Activated CD4-positive, alpha-beta T cell treated with anti-CD3 and anti-CD28 coated beads, Interleukin-2, amount 10 ng/mL, durations not matched to agents 24 days and 14 days (primary cell): ENCODE measurements at regions of chr6 and their contacts with region 1.

Region 1: GRCh38 chr6:118651282-118652050 is at the start of gene CEP85L:
- DNase-seq: peak; percentile 96
- H3K4me3 Mint-ChIP-seq: peak within 1 kb of the TSS; percentile 90
- H3K27ac Mint-ChIP-seq: peak within 1 kb of the TSS; percentile 93
- H3K4me1 Mint-ChIP-seq: peaks cover 29% of the 10 kb centered on the region
- H3K27me3 Mint-ChIP-seq: no peaks in the 10 kb centered on the region
- total RNA-seq, gene CEP85L: 42.3 and 42.7 TPM in 2 replicates

Region 2: DNA sequence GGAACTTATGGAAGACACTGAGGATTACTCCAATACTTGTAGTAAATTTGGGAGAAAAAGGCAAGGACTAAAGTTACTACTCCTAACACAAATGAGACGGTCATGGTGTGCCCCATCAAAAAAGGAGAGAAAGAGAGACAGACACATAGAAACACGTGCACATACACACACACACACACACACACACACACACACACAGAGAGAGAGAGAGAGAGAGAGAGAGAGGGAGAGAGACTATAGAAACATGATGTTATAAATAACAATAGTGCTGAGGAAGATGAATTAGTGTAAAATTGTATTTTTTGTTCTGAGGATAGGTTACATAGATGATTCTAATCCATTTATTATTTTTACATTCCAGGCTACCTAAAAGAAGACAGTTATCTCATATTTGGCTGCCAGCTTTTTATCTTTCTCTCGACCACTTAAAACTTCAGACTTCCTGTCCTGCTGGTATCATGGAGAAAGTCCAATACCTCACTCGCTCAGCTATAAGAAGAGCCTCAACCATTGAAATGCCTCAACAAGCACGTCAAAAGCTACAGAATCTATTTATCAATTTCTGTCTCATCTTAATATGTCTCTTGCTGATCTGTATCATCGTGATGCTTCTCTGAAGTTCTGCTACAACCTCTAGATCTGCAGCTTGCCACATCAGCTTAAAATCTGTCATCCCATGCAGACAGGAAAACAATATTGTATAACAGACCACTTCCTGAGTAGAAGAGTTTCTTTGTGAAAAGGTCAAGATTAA is 92.8 kb before region 1 on chr6:
- intact Hi-C with region 1: no loop called
- DNase-seq: peak; percentile 78
- H3K4me3 Mint-ChIP-seq: peak overlapping the region; percentile 81
- H3K27ac Mint-ChIP-seq: peak overlapping the region; percentile 96
- H3K4me1 Mint-ChIP-seq: peaks cover 26% of the 10 kb centered on the region
- H3K27me3 Mint-ChIP-seq: no peaks in the 10 kb centered on the region

Region 3: DNA sequence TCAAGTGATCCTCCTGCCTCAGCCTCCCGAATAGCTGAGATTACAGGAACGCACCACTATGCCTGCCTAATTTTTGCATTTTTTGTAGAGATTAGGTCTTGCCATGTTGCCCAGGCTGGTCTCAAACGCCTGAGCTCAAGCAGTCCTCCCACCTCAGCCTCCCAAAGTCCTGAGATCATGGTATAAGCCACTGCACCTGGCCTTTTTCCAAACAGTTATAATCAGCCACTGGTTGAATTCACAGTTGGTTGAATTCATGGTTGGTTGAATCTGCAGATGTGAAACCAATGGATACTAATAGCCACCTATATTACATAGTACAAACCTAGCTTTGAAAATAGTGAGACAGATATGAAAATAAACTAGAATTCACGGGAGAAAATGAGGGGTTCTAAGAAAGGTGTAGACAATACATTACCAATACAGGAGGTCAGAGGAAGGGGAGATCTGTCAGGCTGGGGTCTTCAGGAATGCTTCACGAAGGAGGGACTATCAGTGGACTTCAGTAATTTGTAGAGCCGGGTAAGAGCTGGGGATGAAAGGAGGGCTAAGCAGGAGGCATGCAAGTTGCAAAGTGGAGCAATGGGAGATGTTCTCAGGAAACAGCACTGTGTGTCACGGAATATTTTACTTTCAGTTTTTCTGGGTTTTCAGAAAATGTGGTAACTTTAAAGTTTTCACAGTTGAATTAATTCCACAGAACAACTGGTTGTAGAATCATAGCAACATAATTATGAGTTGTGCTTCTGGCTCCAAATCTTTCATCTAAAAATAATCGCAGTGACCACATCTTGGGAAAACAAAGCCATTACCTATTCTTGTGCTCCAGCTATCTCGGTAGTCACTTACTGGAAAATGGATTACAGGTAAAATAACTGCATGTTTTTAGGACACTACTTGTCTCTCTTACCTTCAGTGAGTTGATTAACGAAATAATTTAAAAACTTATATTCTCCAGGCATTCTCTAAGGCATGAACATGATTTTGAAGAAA is 12.8 kb after region 1 on chr6:
- intact Hi-C with region 1: loop called (anchors 1 kb)
- DNase-seq: peak; percentile 73
- H3K4me3 Mint-ChIP-seq: peak overlapping the region; percentile 83
- H3K27ac Mint-ChIP-seq: peak overlapping the region; percentile 95
- H3K4me1 Mint-ChIP-seq: peaks cover 54% of the 10 kb centered on the region
- H3K27me3 Mint-ChIP-seq: no peaks in the 10 kb centered on the region

Region 4: GRCh38 chr6:118776607-118777549 is 125.4 kb after region 1 on chr6:
- intact Hi-C with region 1: loop called (anchors 1 kb)
- DNase-seq: peak; percentile 91
- H3K4me3 Mint-ChIP-seq: peak overlapping the region; percentile 35
- H3K27ac Mint-ChIP-seq: peak overlapping the region; percentile 59
- H3K4me1 Mint-ChIP-seq: peaks cover 15% of the 10 kb centered on the region
- H3K27me3 Mint-ChIP-seq: peaks cover 10% of the 10 kb centered on the region

Region 5: DNA sequence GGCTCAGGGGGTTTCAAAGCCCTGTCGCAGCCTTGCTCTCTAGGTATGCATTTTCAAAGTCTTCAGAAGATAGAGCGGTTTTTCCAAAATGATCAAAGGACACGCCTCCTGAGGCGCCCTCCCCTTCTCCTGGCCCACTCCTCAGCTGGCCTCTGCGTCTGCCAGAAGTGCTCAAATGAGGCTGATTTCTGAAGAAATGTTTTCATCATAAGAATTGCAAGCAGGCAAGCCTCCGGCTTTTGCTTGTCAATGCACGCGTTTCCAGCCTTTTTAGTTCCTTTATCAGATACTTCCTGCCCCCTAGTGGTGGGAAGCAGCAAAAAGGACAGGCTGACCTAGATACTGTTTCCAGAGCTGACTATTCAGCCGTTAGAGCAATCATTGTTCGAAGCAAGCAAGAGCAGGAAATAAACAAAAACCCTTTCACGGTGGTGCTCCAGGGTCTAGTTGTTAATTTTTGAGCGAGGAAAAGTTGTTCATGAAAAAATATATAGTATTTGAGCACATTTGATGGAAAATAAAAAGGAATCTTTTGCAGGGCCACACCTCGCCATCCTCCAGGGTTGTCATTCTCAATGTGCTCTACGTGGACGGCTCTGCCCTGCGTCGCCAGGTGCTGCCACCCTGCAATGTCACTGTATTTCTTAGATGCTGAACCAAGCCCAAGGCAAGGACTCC is 149.1 kb after region 1 on chr6:
- intact Hi-C with region 1: loop called (anchors 2 kb)
- DNase-seq: peak; percentile 95
- H3K4me3 Mint-ChIP-seq: peak overlapping the region; percentile 60
- H3K27ac Mint-ChIP-seq: peak overlapping the region; percentile 51
- H3K4me1 Mint-ChIP-seq: peaks cover 30% of the 10 kb centered on the region
- H3K27me3 Mint-ChIP-seq: no peaks in the 10 kb centered on the region

Region 6: GRCh38 chr6:118843685-118844390 is 192.4 kb after region 1 on chr6:
- intact Hi-C with region 1: loop called (anchors 5 kb)
- DNase-seq: peak; percentile 73
- H3K4me3 Mint-ChIP-seq: peak overlapping the region; percentile 59
- H3K27ac Mint-ChIP-seq: peak overlapping the region; percentile 72
- H3K4me1 Mint-ChIP-seq: peaks cover 22% of the 10 kb centered on the region
- H3K27me3 Mint-ChIP-seq: no peaks in the 10 kb centered on the region

Region 7: DNA sequence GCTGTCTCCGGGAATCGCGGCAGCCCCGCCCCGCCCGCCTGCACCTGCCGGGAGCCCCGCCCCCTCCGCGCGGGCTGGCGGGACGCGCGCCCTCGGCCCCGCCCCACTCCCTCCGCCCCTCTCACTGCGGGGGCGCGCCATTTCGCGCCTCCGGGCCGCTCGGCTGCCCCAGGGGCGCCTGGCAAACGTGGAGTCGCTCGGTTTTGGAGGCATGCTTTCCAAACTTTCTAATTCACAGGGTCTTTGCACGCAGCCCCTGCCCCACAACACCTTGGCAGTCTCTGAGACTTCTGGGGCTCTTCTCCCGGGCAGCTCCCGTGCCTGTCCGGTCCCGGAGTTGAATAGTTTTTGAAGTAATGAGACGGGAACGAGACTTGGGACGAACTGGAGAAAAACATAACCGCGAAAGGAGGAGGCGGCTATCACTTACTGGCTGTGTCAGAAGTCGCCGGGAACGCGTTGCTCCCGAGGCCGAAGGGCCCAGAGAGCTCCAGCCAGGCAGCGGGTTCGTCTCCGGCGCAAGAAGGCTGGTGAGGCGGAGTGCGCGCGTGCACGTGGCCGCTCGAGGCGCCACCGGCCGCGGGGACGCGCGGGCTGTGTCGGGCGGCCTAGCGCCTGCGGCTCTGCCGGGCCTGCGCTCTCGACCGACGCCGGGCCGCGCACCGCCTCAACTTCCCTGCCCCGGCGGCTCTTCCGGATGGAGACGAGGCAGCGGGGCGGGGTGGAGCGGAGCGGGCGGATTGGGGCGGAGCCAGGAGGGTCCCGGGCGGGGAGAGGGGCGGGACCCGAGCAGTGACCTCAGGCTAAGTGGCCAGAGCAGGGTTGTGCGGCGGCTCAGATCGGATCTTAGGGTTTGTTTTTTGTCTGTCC is 283.2 kb after region 1 on chr6 and contains the start of gene MCM9:
- intact Hi-C with region 1: loop called (anchors 2 kb)
- DNase-seq: peak; percentile 97
- H3K4me3 Mint-ChIP-seq: peak within 1 kb of the TSS; percentile 91
- H3K27ac Mint-ChIP-seq: peak within 1 kb of the TSS; percentile 97
- H3K4me1 Mint-ChIP-seq: peaks cover 19% of the 10 kb centered on the region
- H3K27me3 Mint-ChIP-seq: no peaks in the 10 kb centered on the region
- total RNA-seq, gene MCM9: 19.0 and 21.3 TPM in 2 replicates